Activated CD8-positive, alpha-beta T cell treated with anti-CD3 and anti-CD28 coated beads, Interleukin-2, amount 10 ng/mL, durations not matched to agents 7 days and 5 days (primary cell): ENCODE measurements at regions of chr5 and their contacts with region 1.

Region 1: DNA sequence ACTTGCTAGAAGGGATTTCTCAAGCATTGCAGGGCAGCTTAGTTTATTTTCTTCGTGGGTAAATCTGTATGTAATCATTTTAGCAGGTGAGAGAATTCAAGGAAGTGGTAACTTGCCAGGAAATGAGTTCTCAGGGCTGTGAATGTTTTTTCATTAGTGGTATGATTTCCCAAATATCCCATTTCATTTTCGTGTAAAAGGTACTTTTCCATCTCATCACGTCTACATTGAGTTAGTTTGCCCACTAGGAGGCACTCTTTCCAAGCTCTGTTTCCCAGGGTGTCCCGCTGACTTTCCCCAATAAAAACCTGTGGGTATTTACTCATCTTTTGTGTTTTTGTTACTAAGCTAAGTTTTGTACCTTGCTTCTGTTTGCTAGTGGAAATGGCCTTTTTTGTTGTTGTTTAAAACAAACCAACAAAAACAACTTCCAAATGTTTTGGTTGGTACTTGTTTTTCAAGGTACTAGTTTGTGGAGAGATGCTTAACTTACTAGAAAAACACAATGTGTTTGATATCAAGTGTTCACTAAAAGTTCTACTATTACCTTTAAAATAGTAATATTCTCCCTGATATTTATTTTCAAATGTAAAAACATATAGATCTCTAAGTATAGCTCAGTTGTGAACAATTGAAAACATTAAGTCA is 373.6 kb downstream of the ADGRV1 start:
- DNase-seq: peak; percentile 56
- ATAC-seq: no peak
- H3K4me3 Mint-ChIP-seq: no peak overlapping the region
- H3K27ac Mint-ChIP-seq: no peak overlapping the region
- H3K4me1 Mint-ChIP-seq: peaks cover 5% of the 10 kb centered on the region
- H3K27me3 Mint-ChIP-seq: peaks cover 4% of the 10 kb centered on the region

Region 2: GRCh38 chr5:90866333-90866732 is 65.8 kb before region 1 on chr5:
- CTCF ChIA-PET with region 1: interaction called, 12 read pairs
- POLR2A ChIA-PET with region 1: no interaction called
- DNase-seq: no peak
- ATAC-seq: peak; percentile 44
- H3K4me3 Mint-ChIP-seq: no peak overlapping the region
- H3K27ac Mint-ChIP-seq: no peak overlapping the region
- H3K4me1 Mint-ChIP-seq: peaks cover 6% of the 10 kb centered on the region
- H3K27me3 Mint-ChIP-seq: peaks cover 6% of the 10 kb centered on the region

Region 3: DNA sequence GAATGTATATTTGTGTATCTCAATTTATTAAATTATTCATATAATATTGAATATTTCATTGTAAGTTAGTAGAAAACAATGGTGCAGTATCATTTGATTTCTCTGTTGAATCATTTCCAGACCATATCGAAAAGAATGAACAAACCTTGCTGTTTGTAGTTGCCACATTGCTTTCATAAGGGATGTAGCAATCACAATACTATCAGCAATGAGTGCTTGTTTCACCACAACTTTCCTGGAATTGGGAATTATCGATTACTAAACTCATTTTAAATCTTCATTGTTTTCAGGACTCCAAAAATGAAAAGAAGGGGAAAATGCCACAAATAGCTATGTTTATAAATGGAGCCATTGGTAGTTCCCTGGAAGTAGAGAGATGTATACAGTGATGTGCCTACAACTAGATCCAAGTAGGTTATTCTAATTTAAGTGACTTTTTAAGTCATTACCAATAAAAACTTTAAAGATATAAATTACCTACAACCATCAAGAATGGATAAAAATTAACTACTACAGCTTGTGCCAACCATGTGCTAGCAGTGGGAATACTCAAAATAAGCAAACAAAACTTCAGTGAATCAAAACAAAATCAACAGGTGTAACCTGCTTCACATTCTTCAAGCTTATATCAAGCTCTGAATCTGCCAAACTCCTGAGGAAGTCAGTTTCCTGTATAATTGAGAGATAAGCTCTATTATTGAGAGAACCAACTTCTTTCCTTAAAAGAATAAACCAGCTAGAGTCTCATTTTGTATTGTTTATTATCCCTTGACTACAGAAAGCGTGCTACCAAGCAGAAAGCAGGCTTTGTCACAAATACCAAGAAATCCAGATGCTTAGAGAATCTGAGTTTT is 15.0 kb before region 1 on chr5:
- CTCF ChIA-PET with region 1: interaction called, 17 read pairs
- POLR2A ChIA-PET with region 1: no interaction called
- DNase-seq: no peak
- ATAC-seq: no peak
- H3K4me3 Mint-ChIP-seq: no peak overlapping the region
- H3K27ac Mint-ChIP-seq: no peak overlapping the region
- H3K4me1 Mint-ChIP-seq: no peaks in the 10 kb centered on the region
- H3K27me3 Mint-ChIP-seq: no peaks in the 10 kb centered on the region

Region 4: DNA sequence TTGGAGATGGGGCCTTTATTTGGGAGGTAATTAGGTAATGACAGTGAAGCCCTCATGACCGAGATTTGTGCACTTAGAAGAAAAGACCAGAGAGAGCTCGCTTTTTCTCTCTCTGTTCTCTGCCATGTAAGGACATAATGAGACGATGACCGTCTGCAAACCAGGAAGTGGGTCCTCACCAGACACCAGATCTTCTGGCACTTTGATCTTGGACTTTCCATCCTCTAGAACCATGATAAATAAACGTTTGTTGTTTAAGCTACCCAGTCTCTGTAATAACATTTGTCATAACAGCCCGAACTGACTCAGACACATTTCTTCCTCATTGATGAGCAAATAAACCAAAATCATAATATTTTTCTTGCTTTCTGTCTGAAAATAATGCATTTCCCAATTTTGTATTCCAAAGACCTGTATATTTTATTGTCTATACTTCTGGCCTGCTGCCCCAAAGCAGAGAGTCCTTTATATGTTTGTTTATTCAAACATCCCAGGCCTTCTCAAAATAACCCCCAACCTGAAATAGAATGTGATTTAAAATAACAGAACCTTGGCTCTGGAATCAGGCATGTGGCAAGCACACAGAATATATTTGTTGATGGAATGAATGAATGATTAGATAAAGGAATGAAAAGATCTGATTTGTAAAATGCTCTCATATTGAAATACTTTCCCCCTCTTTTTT is 22.9 kb after region 1 on chr5:
- CTCF ChIA-PET with region 1: no interaction called
- POLR2A ChIA-PET with region 1: no interaction called
- DNase-seq: no peak
- ATAC-seq: no peak
- H3K4me3 Mint-ChIP-seq: no peak overlapping the region
- H3K27ac Mint-ChIP-seq: no peak overlapping the region
- H3K4me1 Mint-ChIP-seq: peaks cover 4% of the 10 kb centered on the region
- H3K27me3 Mint-ChIP-seq: peaks cover 12% of the 10 kb centered on the region